ENCODE measurements at regions of chr6 and their contacts with region 1.

Region 1: GRCh38 chr6:169190144-169190584 is 63.5 kb downstream of the THBS2 start:
- DNase-seq: peak; percentile 90
- H3K4me3 ChIP-seq: no peak overlapping the region
- CTCF ChIP-seq: no peak

Region 2: DNA sequence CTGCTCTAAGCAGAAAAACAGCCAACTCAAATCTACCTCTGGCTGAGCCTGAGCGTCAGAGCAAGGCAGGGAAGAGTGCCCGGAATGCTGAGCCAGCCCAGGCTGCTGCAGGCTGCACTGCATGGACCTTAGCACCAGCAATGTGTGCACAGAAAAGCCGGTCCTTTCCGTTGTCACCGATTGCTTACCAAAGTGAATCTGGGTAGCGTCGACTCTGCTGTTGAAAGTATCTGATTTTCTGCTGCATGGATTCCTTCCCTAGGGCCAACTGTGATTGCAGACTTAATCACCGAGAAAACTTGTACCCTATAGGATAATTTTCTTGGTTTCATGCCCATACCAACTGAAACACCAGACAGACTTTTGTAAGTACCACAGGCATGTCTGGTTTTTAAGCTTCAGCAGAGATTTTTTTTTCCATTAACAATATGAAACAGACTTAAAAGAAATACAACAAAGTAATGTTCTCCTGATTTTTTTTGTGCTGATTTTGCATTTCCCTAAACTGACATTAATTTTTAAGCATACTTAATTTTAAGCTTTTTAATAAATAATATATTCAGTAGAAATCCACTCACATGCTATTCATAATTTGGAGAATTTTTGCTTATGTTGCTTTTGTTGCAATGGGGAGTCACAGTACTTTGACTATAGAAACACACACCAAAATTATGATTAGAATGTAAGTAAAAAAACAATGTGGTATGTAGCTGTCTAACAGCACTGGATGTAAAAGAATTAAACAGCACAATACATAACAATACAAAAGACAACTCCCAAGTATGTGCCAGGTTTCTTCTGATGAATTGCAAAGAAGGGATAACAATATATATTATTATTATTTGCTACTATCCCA is 154.6 kb before region 1 on chr6:
- CTCF ChIA-PET with region 1: no interaction called
- POLR2A ChIA-PET with region 1: interaction called, 12 read pairs
- DNase-seq: peak; percentile 84
- H3K4me3 ChIP-seq: peak overlapping the region; percentile 41
- CTCF ChIP-seq: no peak

Measured in AG04449 (cell line).